ENCODE measurements at regions of chr15 and their contacts with region 1.

Region 1: DNA sequence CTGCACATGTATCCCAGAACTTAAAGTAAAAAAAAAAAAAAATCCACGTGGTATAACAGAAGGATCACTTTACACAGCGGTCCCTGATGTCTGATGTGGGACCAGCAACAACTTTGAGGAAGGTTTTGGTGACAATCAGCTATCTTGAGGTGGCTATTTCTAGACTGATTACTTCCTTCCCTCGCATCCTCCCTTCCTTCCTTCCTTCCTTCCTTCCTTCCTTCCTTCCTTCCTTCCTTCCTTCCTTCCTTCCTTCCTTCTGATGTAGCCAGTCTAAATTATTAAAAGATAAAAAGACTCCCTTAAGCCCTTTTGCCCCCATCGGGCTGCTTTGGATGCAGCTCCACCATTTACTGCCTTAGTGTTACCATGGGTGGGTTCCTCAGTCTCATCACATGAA is 14.9 kb downstream of the SORD start:
- DNase-seq: no peak
- H3K4me3 Mint-ChIP-seq: no peak overlapping the region
- H3K27ac Mint-ChIP-seq: no peak overlapping the region
- H3K4me1 Mint-ChIP-seq: peaks cover 25% of the 10 kb centered on the region
- H3K27me3 Mint-ChIP-seq: no peaks in the 10 kb centered on the region

Region 2: GRCh38 chr15:44971036-44971435 is 66.9 kb before region 1 on chr15:
- CTCF ChIA-PET with region 1: interaction called, 22 read pairs
- DNase-seq: no peak
- H3K4me3 Mint-ChIP-seq: no peak overlapping the region
- H3K27ac Mint-ChIP-seq: no peak overlapping the region
- H3K4me1 Mint-ChIP-seq: no peaks in the 10 kb centered on the region
- H3K27me3 Mint-ChIP-seq: peaks cover 13% of the 10 kb centered on the region

Region 3: GRCh38 chr15:45118131-45118588 is 80.2 kb after region 1 on chr15:
- CTCF ChIA-PET with region 1: interaction called, 13 read pairs
- DNase-seq: peak; percentile 90
- H3K4me3 Mint-ChIP-seq: peak overlapping the region; percentile 43
- H3K27ac Mint-ChIP-seq: no peak overlapping the region
- H3K4me1 Mint-ChIP-seq: peaks cover 24% of the 10 kb centered on the region
- H3K27me3 Mint-ChIP-seq: peaks cover 94% of the 10 kb centered on the region

Measured in activated naive CD4-positive, alpha-beta T cell treated with anti-CD3 and anti-CD28 coated beads, Interleukin-2, amount 10 ng/mL, durations not matched to agents 7 days and 5 days (primary cell).